ENCODE measurements at regions of chr2 and their contacts with region 1.

Region 1: GRCh38 chr2:171072164-171072563 is 88.5 kb downstream of the TLK1 start:
- DNase-seq: no peak
- ATAC-seq: no peak
- H3K4me3 ChIP-seq: no peak overlapping the region
- H3K27ac ChIP-seq: no peak overlapping the region
- H3K4me1 ChIP-seq: no peaks in the 10 kb centered on the region
- H3K27me3 ChIP-seq: no peaks in the 10 kb centered on the region
- CTCF ChIP-seq: no peak

Region 2: GRCh38 chr2:171086352-171087290 is 14.5 kb after region 1 on chr2:
- CTCF ChIA-PET with region 1: interaction called, 10 read pairs
- POLR2A ChIA-PET with region 1: no interaction called
- intact Hi-C with region 1: no loop called
- DNase-seq: peak; percentile 66
- ATAC-seq: peak; percentile 84
- H3K4me3 ChIP-seq: no peak overlapping the region
- H3K27ac ChIP-seq: no peak overlapping the region
- H3K4me1 ChIP-seq: peaks cover 5% of the 10 kb centered on the region
- H3K27me3 ChIP-seq: no peaks in the 10 kb centered on the region
- CTCF ChIP-seq: peak; percentile 89

Region 3: DNA sequence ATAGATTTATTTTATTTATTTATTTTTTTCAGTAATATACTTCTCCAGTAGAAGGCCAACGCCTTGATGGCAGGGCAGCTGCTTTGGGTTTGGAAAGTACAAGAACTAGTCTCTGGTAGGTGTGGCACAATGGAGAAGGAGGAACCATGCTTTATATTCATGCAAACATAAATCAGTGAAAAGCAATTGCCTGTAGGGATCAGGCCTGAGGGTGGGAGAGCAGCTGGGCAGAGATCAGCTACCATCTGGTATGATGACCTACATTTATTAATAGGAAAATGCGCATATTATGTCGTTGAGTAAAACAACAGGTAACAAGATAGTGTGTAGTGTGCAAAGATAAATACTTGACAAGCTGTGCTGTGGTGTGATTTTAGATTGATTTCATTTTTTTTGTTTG is 208.9 kb after region 1 on chr2:
- CTCF ChIA-PET with region 1: no interaction called
- POLR2A ChIA-PET with region 1: no interaction called
- intact Hi-C with region 1: no loop called
- DNase-seq: no peak
- ATAC-seq: no peak
- H3K4me3 ChIP-seq: no peak overlapping the region
- H3K27ac ChIP-seq: no peak overlapping the region
- H3K4me1 ChIP-seq: no peaks in the 10 kb centered on the region
- H3K27me3 ChIP-seq: no peaks in the 10 kb centered on the region
- CTCF ChIP-seq: no peak

Measured in PC-3 (cell line).